Activated CD4-positive, alpha-beta T cell treated with anti-CD3 and anti-CD28 coated beads for 36 hours (primary cell): ENCODE measurements at regions of chr10 and their contacts with region 1.

Region 1: DNA sequence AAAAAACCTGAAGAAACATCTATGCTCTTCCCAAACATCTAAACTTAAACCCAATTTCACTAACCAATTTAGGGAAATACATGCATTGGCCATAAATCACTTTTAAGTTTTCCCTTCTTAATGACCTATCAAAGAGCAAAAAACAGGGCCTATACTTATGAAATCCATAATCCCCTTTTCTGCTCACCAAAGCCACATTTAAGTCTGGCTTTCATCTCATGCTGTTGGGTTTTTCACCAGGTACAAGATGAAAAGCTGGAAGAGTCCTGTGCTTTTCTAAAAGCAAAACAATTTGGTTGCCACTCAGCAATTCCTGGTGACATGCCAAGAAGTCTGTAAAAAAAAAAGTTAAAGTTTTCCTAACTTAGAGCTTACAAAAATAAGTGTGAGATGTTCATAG is 92.6 kb downstream of the HPSE2 start:
- DNase-seq: no peak
- ATAC-seq: no peak
- H3K4me3 Mint-ChIP-seq: no peak overlapping the region
- H3K27ac Mint-ChIP-seq: no peak overlapping the region
- H3K4me1 Mint-ChIP-seq: peaks cover 2% of the 10 kb centered on the region
- H3K27me3 Mint-ChIP-seq: no peaks in the 10 kb centered on the region

Region 2: GRCh38 chr10:99115703-99116102 is 27.3 kb before region 1 on chr10:
- CTCF ChIA-PET with region 1: no interaction called
- POLR2A ChIA-PET with region 1: no interaction called
- intact Hi-C with region 1: no loop called
- DNase-seq: no peak
- ATAC-seq: no peak
- H3K4me3 Mint-ChIP-seq: no peak overlapping the region
- H3K27ac Mint-ChIP-seq: no peak overlapping the region
- H3K4me1 Mint-ChIP-seq: no peaks in the 10 kb centered on the region
- H3K27me3 Mint-ChIP-seq: no peaks in the 10 kb centered on the region

Region 3: DNA sequence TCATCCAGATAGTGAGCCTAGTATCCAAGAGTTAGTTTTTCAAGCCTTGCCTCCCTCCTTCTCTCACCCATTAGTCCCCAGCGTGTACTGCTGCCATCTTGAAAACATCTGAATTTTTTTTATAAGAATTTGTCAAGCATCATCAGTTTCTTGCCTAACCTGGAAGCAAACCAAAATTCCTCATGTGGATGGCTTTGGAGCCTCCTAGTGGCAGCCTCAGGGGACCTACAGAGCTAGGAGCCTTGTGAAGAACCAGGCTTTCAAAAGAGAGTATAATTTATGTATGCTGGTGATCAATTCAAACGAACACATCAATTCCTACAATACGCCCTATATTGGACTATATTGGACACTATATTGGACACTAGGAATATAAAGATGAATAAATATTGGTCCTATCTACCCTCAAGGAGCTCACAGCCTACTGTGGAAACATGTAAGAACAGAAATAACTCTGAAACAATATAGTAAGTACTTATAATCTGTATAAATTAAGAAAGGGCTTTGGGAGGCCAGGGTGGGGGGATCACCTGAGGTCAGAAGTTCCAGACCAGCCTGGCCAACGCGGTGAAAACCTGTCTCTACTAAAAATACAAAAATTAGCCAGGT is 29.2 kb after region 1 on chr10:
- CTCF ChIA-PET with region 1: no interaction called
- POLR2A ChIA-PET with region 1: no interaction called
- intact Hi-C with region 1: loop called in 1 of 2 experiments (anchors 1 kb)
- DNase-seq: peak; percentile 18
- ATAC-seq: no peak
- H3K4me3 Mint-ChIP-seq: no peak overlapping the region
- H3K27ac Mint-ChIP-seq: no peak overlapping the region
- H3K4me1 Mint-ChIP-seq: no peaks in the 10 kb centered on the region
- H3K27me3 Mint-ChIP-seq: peaks cover 11% of the 10 kb centered on the region